ENCODE measurements at regions of chr1 and their contacts with region 1.

Region 1: DNA sequence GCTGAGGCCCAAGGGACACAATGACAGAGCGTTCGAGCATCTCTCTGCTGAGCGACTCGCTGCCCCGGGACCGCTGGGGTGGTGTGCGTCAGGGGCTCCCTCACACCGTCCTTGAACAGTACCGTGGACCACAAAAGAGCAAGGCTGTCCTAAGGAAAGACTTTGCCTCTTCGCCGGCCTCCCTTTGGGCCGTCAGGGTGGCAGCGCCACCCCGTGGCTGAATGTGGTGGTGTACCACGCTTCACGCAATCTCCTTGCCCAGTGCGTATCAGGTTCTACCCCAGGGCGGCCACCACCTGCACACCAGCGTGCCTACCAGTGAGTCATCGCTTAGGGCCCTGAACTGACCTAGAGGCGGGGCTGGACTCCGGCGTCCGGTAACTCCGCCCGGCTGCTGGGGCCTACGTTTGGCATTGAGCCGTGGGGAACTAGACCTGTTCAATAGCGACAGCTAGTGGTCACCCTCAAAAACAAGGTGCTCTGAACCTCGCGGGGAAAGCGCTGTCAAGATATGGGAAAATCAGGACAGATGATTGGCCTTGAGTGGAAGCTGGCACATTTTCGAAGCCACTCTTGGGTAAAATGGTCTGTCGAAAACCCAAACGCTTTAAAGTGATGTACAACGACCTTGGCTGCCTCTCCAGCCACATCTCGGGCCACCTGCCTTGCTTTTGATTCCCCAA is 8.1 kb upstream of the TRAF3IP3 start:
- DNase-seq: peak; percentile 88
- H3K4me3 Mint-ChIP-seq: peak overlapping the region; percentile 66
- H3K27ac Mint-ChIP-seq: peak overlapping the region; percentile 88
- H3K4me1 Mint-ChIP-seq: peaks cover 72% of the 10 kb centered on the region
- H3K27me3 Mint-ChIP-seq: no peaks in the 10 kb centered on the region

Region 2: GRCh38 chr1:208772891-208773290 is 974.8 kb before region 1 on chr1:
- CTCF ChIA-PET with region 1: no interaction called
- DNase-seq: no peak
- H3K4me3 Mint-ChIP-seq: no peak overlapping the region
- H3K27ac Mint-ChIP-seq: no peak overlapping the region
- H3K4me1 Mint-ChIP-seq: no peaks in the 10 kb centered on the region
- H3K27me3 Mint-ChIP-seq: no peaks in the 10 kb centered on the region

Region 3: GRCh38 chr1:209565759-209566678 is 181.7 kb before region 1 on chr1:
- CTCF ChIA-PET with region 1: interaction called, 52 read pairs
- DNase-seq: peak; percentile 86
- H3K4me3 Mint-ChIP-seq: no peak overlapping the region
- H3K27ac Mint-ChIP-seq: peak overlapping the region; percentile 16
- H3K4me1 Mint-ChIP-seq: peaks cover 10% of the 10 kb centered on the region
- H3K27me3 Mint-ChIP-seq: peaks cover 64% of the 10 kb centered on the region

Region 4: GRCh38 chr1:209585672-209586071 is 162.0 kb before region 1 on chr1:
- CTCF ChIA-PET with region 1: interaction called, 15 read pairs
- DNase-seq: peak; percentile 40
- H3K4me3 Mint-ChIP-seq: no peak overlapping the region
- H3K27ac Mint-ChIP-seq: no peak overlapping the region
- H3K4me1 Mint-ChIP-seq: peaks cover 2% of the 10 kb centered on the region
- H3K27me3 Mint-ChIP-seq: peaks cover 16% of the 10 kb centered on the region

Region 5: DNA sequence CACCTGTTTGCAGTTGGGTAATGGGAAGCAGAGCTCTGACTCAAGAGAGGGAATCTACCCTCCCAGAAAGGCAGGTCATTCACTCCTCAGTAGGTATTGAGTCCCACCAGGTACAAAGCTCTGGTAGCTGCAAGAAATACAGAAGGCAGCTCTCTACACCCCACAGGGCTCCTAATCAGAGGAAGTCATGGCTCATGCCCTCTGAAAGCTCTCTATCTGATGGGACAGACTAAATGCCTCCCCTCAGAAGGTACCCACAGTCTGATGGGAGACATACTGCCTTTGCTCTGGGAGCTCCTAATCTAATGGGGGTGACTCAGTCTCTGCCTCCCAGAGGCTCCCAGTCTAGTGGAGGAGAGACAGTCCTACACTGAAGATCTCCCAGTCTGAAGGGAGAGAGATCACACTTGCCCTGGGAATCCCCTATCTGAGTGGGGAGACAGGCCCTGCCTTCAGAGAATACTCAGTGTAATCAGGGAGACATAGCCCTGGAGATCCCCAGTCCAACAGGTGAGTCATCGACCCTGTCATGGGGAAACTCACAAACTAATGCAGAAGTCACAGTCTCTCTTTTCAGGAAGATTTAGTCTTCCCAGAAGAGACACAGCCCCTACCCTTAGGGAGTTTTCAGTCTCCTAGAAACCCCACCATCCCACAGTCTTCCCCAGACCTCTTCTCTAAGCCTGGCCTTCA is 140.5 kb before region 1 on chr1:
- CTCF ChIA-PET with region 1: interaction called, 12 read pairs
- DNase-seq: no peak
- H3K4me3 Mint-ChIP-seq: no peak overlapping the region
- H3K27ac Mint-ChIP-seq: no peak overlapping the region
- H3K4me1 Mint-ChIP-seq: peaks cover 15% of the 10 kb centered on the region
- H3K27me3 Mint-ChIP-seq: no peaks in the 10 kb centered on the region

Region 6: DNA sequence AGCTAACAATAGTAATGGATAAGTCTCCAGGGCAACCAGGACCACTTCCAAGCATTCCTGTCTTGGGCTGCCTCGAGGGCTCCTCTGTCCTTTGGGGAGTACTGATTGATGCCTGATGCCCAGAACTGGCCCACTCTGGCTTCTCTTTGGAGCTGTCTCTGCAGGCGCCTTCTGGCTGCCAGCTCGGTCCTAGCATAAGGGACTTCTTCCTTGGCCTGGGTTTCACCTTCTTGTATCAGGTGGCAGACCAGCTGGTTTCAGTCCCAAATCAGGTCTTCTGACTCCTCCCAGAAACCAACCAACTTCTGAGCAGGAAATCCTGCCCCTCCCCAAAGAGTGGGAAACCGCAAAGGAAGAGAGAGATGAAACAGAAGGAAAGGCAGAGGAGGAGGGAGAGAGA is 61.9 kb before region 1 on chr1:
- CTCF ChIA-PET with region 1: interaction called, 14 read pairs
- DNase-seq: peak; percentile 73
- H3K4me3 Mint-ChIP-seq: peak overlapping the region; percentile 43
- H3K27ac Mint-ChIP-seq: peak overlapping the region; percentile 69
- H3K4me1 Mint-ChIP-seq: peaks cover 54% of the 10 kb centered on the region
- H3K27me3 Mint-ChIP-seq: peaks cover 8% of the 10 kb centered on the region

Region 7: DNA sequence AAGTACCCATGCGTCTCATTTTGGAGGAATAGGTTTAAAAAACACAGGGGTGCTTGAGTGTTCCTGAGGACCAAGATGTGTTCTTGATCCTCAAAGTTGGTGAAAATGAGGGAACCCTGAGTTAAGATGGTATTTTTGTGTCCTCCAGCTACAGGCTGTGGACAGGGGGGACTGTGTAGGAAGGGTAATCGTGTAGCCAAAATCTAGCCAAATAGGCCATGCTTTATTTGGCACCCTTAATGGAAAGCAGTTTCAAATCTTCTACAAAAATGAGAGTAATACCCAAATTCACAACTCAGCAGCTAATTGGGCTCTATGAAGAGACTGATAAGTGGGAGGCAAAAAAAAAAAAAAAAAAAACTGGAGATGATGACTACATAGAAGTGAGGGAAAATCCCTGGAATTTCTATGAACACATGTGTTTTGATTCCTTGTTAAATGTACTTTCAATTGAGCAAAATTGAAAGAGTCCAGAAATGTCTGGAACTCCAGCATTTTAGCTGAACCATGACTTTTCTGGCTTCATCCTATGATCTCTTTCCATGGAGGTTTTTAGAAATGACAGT is 42.6 kb before region 1 on chr1:
- CTCF ChIA-PET with region 1: interaction called, 18 read pairs
- DNase-seq: no peak
- H3K4me3 Mint-ChIP-seq: no peak overlapping the region
- H3K27ac Mint-ChIP-seq: peak overlapping the region; percentile 45
- H3K4me1 Mint-ChIP-seq: peaks cover 23% of the 10 kb centered on the region
- H3K27me3 Mint-ChIP-seq: no peaks in the 10 kb centered on the region

Region 8: GRCh38 chr1:209769171-209769904 is 21.6 kb after region 1 on chr1:
- CTCF ChIA-PET with region 1: interaction called, 96 read pairs
- DNase-seq: peak; percentile 88
- H3K4me3 Mint-ChIP-seq: no peak overlapping the region
- H3K27ac Mint-ChIP-seq: no peak overlapping the region
- H3K4me1 Mint-ChIP-seq: peaks cover 32% of the 10 kb centered on the region
- H3K27me3 Mint-ChIP-seq: no peaks in the 10 kb centered on the region

Region 9: GRCh38 chr1:209791920-209792319 is 44.2 kb after region 1 on chr1:
- CTCF ChIA-PET with region 1: no interaction called
- DNase-seq: no peak
- H3K4me3 Mint-ChIP-seq: no peak overlapping the region
- H3K27ac Mint-ChIP-seq: no peak overlapping the region
- H3K4me1 Mint-ChIP-seq: peaks cover 16% of the 10 kb centered on the region
- H3K27me3 Mint-ChIP-seq: peaks cover 44% of the 10 kb centered on the region

Measured in activated naive CD4-positive, alpha-beta T cell treated with anti-CD3 and anti-CD28 coated beads, Interleukin-2, amount 10 ng/mL, durations not matched to agents 7 days and 5 days (primary cell).